ENCODE measurements at regions of chr1 and their contacts with region 1.

Region 1: GRCh38 chr1:206030714-206031113 is 7.0 kb upstream of the CTSE start:
- DNase-seq: peak; percentile 95
- H3K4me3 Mint-ChIP-seq: no peak overlapping the region
- H3K27ac Mint-ChIP-seq: no peak overlapping the region
- H3K4me1 Mint-ChIP-seq: peaks cover 32% of the 10 kb centered on the region
- H3K27me3 Mint-ChIP-seq: peaks cover 11% of the 10 kb centered on the region
- CTCF ChIP-seq: peak; percentile 95

Region 2: DNA sequence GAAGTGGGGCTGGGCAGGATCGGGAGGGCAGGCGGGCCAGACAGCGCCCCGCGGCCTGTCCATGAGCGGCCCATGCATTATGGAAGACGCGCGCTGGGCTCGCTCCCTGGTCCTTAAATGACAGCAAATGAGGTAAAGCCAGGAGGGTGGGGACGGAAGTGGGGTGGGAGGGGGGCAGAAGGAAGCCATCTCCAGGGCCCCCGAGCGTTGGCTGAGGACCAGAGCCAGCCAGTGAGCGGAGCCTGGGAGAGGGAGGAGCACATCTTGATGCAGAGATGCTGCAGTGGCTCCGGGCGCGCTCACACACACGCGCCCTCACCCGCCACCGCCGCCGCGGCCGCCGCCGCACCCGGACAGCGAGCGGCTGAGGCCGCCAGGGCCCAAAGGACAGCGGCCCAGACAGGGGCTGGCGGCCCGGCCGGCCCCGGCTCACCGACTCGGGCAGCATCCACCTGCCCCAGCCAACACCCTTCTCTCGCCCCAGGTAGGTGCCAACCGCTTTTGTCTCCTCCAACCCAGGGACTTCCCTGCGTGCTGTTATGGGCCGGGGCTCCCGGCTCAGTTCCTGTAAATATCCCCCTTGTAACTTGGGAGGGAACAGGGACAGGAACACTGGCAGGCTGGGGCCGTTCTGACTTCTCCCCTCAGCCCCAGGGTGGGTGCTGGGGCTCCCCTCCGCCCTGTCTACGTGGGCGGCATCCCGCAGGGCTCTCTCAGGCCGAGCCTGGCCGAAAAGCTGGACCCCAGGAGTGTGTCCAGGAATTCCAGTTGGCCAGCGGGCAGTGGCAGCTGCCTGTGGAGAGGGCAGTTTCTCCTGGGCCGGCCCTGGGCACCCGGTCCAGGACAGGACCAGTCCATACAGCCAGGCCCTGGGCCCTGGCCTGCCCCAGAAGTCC is 987.6 kb before region 1 on chr1 and contains the start of gene CNTN2:
- CTCF ChIA-PET with region 1: no interaction called
- POLR2A ChIA-PET with region 1: no interaction called
- intact Hi-C with region 1: no loop called
- DNase-seq: no peak
- H3K4me3 Mint-ChIP-seq: no peak within 1 kb of the TSS
- H3K27ac Mint-ChIP-seq: no peak within 1 kb of the TSS
- H3K4me1 Mint-ChIP-seq: no peaks in the 10 kb centered on the region
- H3K27me3 Mint-ChIP-seq: peaks cover 84% of the 10 kb centered on the region
- CTCF ChIP-seq: no peak
- total RNA-seq, gene CNTN2: 0.05 TPM in 1 of 2 replicates, not detected in the other

Region 3: GRCh38 chr1:205983925-205984725 is 46.6 kb before region 1 on chr1:
- CTCF ChIA-PET with region 1: interaction called, 81 read pairs
- POLR2A ChIA-PET with region 1: interaction called, 29 read pairs
- intact Hi-C with region 1: loop called (anchors 1 kb)
- DNase-seq: peak; percentile 97
- H3K4me3 Mint-ChIP-seq: no peak overlapping the region
- H3K27ac Mint-ChIP-seq: peak overlapping the region; percentile 40
- H3K4me1 Mint-ChIP-seq: peaks cover 23% of the 10 kb centered on the region
- H3K27me3 Mint-ChIP-seq: no peaks in the 10 kb centered on the region
- CTCF ChIP-seq: peak; percentile 99

Region 4: DNA sequence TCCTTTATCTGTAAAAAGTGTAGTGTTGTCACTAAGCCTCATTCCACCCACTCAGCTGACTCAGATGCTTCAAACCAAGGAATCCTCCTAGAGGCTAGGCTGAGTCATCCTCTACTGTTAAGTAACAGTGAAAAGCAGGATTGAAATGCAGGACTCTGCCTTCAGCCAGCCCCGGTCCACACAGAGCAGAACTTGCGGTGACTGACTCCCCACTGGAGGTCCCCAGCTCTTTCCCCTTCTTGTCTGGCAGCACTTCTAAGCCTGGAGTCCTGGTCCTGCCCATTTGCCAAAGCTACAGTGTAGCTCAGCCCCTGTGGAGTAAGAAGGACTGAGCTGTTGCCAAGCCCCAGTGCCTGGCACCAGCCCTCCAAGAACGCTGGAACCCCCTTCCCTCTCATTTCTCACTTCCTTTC is 29.2 kb before region 1 on chr1:
- CTCF ChIA-PET with region 1: interaction called, 57 read pairs
- POLR2A ChIA-PET with region 1: interaction called, 52 read pairs
- intact Hi-C with region 1: no loop called
- DNase-seq: peak; percentile 99
- H3K4me3 Mint-ChIP-seq: peak overlapping the region; percentile 69
- H3K27ac Mint-ChIP-seq: peak overlapping the region; percentile 75
- H3K4me1 Mint-ChIP-seq: peaks cover 37% of the 10 kb centered on the region
- H3K27me3 Mint-ChIP-seq: no peaks in the 10 kb centered on the region
- CTCF ChIP-seq: no peak

Region 5: GRCh38 chr1:206041640-206042039 is 10.9 kb after region 1 on chr1:
- CTCF ChIA-PET with region 1: interaction called, 72 read pairs
- POLR2A ChIA-PET with region 1: interaction called, 26 read pairs
- intact Hi-C with region 1: no loop called
- DNase-seq: peak; percentile 51
- H3K4me3 Mint-ChIP-seq: no peak overlapping the region
- H3K27ac Mint-ChIP-seq: no peak overlapping the region
- H3K4me1 Mint-ChIP-seq: peaks cover 7% of the 10 kb centered on the region
- H3K27me3 Mint-ChIP-seq: peaks cover 26% of the 10 kb centered on the region
- CTCF ChIP-seq: no peak

Region 6: GRCh38 chr1:206094024-206094423 is 63.3 kb after region 1 on chr1:
- CTCF ChIA-PET with region 1: interaction called, 15 read pairs
- POLR2A ChIA-PET with region 1: interaction called, 4 read pairs
- intact Hi-C with region 1: no loop called
- DNase-seq: no peak
- H3K4me3 Mint-ChIP-seq: no peak overlapping the region
- H3K27ac Mint-ChIP-seq: no peak overlapping the region
- H3K4me1 Mint-ChIP-seq: no peaks in the 10 kb centered on the region
- H3K27me3 Mint-ChIP-seq: peaks cover 9% of the 10 kb centered on the region
- CTCF ChIP-seq: no peak

Measured in MCF 10A (cell line).